B cell (primary cell): ENCODE measurements at regions of chr11 and their contacts with region 1.

Region 1: GRCh38 chr11:88301488-88302140 is 35.9 kb downstream of the CTSC start:
- DNase-seq: peak; percentile 51
- ATAC-seq: peak; percentile 75
- H3K4me3 ChIP-seq: peak overlapping the region in 1 of 5 experiments; percentile 32
- H3K4me3 Mint-ChIP-seq: peak overlapping the region; percentile 63
- H3K27ac ChIP-seq: peak overlapping the region; percentile 43 to 66
- H3K27ac Mint-ChIP-seq: peak overlapping the region; percentile 84
- H3K4me1 ChIP-seq: peaks cover 0 to 6% of the 10 kb centered on the region in 2 donors
- H3K4me1 Mint-ChIP-seq: peaks cover 21% of the 10 kb centered on the region
- H3K27me3 ChIP-seq: no peaks in the 10 kb centered on the region
- H3K27me3 Mint-ChIP-seq: no peaks in the 10 kb centered on the region
- CTCF ChIP-seq: no peak

Region 2: DNA sequence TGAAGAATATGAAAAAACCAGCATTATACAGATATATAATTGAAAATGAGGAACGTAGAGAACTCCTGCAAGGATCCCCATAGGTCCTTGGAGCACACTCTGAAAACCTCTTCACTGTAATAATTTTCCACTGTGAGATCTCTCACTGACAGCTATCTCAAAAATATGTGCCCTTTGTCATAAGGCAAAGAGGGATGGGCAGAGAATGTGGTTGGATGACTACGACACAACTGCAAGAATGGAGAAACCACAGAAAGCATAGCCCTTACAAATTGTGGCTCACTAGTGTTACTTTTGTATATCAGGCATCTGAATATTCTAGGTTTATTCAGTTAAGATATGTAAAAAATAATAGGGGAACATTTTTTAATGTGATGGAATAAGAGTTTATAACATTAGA is 43.8 kb after region 1 on chr11:
- CTCF ChIA-PET with region 1: no interaction called
- POLR2A ChIA-PET with region 1: no interaction called
- intact Hi-C with region 1: no loop called
- DNase-seq: no peak
- ATAC-seq: no peak
- H3K4me3 ChIP-seq: no peak overlapping the region
- H3K4me3 Mint-ChIP-seq: no peak overlapping the region
- H3K27ac ChIP-seq: no peak overlapping the region
- H3K27ac Mint-ChIP-seq: no peak overlapping the region
- H3K4me1 ChIP-seq: no peaks in the 10 kb centered on the region
- H3K4me1 Mint-ChIP-seq: no peaks in the 10 kb centered on the region
- H3K27me3 ChIP-seq: no peaks in the 10 kb centered on the region
- H3K27me3 Mint-ChIP-seq: no peaks in the 10 kb centered on the region
- CTCF ChIP-seq: no peak

Region 3: GRCh38 chr11:88357323-88358039 is 55.9 kb after region 1 on chr11:
- CTCF ChIA-PET with region 1: no interaction called
- POLR2A ChIA-PET with region 1: no interaction called
- intact Hi-C with region 1: loop called (anchors 5 kb)
- DNase-seq: no peak
- ATAC-seq: no peak
- H3K4me3 ChIP-seq: no peak overlapping the region
- H3K4me3 Mint-ChIP-seq: no peak overlapping the region
- H3K27ac ChIP-seq: peak overlapping the region in 1 of 2 donors; percentile 3
- H3K27ac Mint-ChIP-seq: no peak overlapping the region
- H3K4me1 ChIP-seq: peaks cover 6 to 7% of the 10 kb centered on the region in 2 donors
- H3K4me1 Mint-ChIP-seq: peaks cover 33% of the 10 kb centered on the region
- H3K27me3 ChIP-seq: no peaks in the 10 kb centered on the region
- H3K27me3 Mint-ChIP-seq: no peaks in the 10 kb centered on the region
- CTCF ChIP-seq: no peak

Region 4: DNA sequence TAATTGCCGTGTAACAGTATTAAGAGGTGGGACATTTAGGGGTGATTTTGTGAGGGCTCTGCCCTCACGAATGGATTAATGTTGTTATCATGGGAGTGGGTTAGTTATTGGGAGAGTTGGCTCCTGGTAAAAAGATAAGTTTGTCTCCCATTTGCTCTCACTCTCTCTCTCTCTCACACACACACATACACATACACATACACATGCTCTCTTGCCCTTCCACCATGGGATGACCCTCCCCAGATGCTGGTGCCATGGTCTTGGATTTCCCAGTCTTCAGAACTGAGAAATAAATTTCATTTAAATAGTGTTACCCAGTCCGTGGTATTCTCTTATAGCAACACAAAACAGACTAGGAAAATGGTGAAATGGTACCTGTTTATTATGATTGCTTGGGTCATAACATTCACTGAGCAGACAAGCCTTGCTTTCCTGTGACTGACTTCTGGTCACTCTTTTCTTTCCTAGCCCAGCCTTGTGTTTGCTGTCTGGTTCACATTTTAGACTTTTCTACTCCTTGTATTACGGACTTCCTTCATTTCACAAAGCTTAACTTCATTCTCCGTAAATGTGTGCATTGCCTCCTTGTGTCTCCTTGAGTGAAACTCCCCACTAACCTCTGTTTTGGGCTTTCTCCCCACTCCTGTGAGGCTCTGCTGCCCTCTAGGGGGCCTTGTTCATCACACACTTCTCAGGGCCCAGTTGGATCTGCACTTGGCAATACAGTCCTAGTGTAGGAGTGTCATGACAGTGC is 242.5 kb after region 1 on chr11:
- CTCF ChIA-PET with region 1: no interaction called
- POLR2A ChIA-PET with region 1: no interaction called
- intact Hi-C with region 1: no loop called
- DNase-seq: peak; percentile 64
- ATAC-seq: peak; percentile 70
- H3K4me3 ChIP-seq: no peak overlapping the region
- H3K4me3 Mint-ChIP-seq: no peak overlapping the region
- H3K27ac ChIP-seq: no peak overlapping the region
- H3K27ac Mint-ChIP-seq: no peak overlapping the region
- H3K4me1 ChIP-seq: no peaks in the 10 kb centered on the region
- H3K4me1 Mint-ChIP-seq: no peaks in the 10 kb centered on the region
- H3K27me3 ChIP-seq: no peaks in the 10 kb centered on the region
- H3K27me3 Mint-ChIP-seq: no peaks in the 10 kb centered on the region
- CTCF ChIP-seq: peak; percentile 87